ENCODE measurements at regions of chr7 and their contacts with region 1.

Region 1: DNA sequence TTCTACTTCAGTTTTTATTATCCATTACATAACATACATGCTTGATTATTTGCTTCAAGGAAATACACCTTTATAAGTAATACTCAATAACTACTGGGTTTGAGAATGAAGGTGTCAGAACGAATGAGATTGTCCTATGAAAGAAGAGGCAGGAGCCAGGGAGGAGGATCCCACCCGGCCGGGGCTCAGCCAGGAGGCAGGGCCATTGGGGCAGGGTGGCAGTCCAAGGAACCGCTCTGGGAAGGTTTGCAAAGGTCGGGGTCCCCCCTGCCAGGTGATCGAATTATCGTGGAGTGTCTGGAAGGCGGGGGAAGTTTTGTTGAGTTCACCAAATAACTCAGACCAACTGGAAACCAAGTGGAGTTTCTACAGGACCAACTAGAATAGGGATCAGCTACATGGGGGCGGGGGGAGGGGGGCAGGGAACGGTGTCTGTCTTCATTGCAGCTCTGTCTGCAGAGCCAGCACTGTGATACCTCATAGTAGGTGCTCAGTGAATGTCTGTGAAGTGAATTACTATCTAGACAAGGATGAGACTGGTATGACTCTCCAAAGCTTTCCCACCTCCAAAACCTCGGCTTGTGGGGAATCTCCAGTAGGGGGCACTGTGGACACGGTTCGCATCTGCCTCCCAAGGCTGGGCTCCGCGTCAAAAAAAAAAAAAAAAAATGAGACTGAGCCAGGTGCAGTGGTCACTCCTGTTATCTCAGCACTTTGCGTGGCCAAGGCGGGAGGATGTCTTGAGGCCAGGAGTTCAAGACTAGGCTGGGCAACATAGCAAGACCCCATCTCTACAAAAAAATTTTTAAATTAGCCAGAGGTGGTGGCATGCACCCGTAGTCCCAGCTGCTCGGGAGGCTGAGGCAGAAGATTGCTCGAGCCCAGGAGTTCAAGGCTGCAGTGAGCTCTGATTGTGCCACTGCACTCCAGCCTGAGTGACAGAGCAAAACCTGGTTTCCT is 9.4 kb downstream of the TRIM56 start:
- DNase-seq: peak; percentile 66
- H3K4me3 ChIP-seq: no peak overlapping the region
- H3K27ac ChIP-seq: no peak overlapping the region
- H3K4me1 ChIP-seq: no peaks in the 10 kb centered on the region
- H3K27me3 ChIP-seq: no peaks in the 10 kb centered on the region
- CTCF ChIP-seq: peak; percentile 84

Region 2: GRCh38 chr7:100943693-100944092 is 151.0 kb before region 1 on chr7:
- CTCF ChIA-PET with region 1: interaction called, 10 read pairs
- POLR2A ChIA-PET with region 1: no interaction called
- intact Hi-C with region 1: no loop called
- DNase-seq: no peak
- H3K4me3 ChIP-seq: no peak overlapping the region
- H3K27ac ChIP-seq: no peak overlapping the region
- H3K4me1 ChIP-seq: peaks cover 4% of the 10 kb centered on the region
- H3K27me3 ChIP-seq: no peaks in the 10 kb centered on the region
- CTCF ChIP-seq: no peak

Region 3: DNA sequence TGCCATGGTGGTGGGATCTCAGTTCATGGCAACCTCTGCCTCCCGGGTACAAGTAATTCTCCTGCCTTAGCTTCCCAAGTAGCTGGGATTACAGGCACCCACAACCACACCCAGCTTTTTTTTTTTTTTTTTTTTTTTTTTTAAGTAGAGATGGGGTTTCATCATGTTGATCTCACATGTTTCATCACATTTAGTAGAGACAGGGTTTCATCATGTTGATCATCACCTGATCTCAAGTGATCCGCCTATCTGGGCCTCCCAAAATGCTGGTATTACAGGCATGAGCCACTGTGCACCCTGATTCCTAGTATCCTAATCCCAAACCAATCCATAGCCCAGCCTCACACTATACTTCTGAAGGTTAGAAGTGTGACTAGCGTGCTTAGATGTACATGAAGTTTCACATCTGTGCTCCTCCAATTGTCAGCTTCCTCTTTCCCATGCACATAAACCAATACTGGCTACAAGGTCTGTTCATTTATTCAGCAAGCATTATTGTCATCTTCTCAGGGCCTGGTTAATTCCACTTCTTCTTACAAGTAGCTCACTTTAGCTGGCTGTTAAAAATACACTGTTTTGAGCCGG is 92.2 kb after region 1 on chr7:
- CTCF ChIA-PET with region 1: no interaction called
- POLR2A ChIA-PET with region 1: no interaction called
- intact Hi-C with region 1: loop called (anchors 1 kb)
- DNase-seq: no peak
- H3K4me3 ChIP-seq: no peak overlapping the region
- H3K27ac ChIP-seq: no peak overlapping the region
- H3K4me1 ChIP-seq: no peaks in the 10 kb centered on the region
- H3K27me3 ChIP-seq: no peaks in the 10 kb centered on the region
- CTCF ChIP-seq: no peak

Region 4: GRCh38 chr7:101217388-101218235 is 122.9 kb after region 1 on chr7 and contains the starts of genes PLOD3 and ZNHIT1:
- CTCF ChIA-PET with region 1: no interaction called
- POLR2A ChIA-PET with region 1: no interaction called
- intact Hi-C with region 1: no loop called
- DNase-seq: peak; percentile 99
- H3K4me3 ChIP-seq: peak within 1 kb of the TSS; percentile 68
- H3K27ac ChIP-seq: peak within 1 kb of the TSS; percentile 78
- H3K4me1 ChIP-seq: peaks cover 25% of the 10 kb centered on the region
- H3K27me3 ChIP-seq: no peaks in the 10 kb centered on the region
- CTCF ChIP-seq: no peak
- total RNA-seq, gene PLOD3: 77.0 and 84.1 TPM in 2 replicates
- total RNA-seq, gene ZNHIT1: 64.4 and 65.1 TPM in 2 replicates